GM10248 (cell line): ENCODE measurements at regions of chr20 and their contacts with region 1.

Region 1: GRCh38 chr20:47272893-47273590 is 83.5 kb downstream of the ZMYND8 start:
- DNase-seq: peak; percentile 61
- CTCF ChIP-seq: peak; percentile 81

Region 2: DNA sequence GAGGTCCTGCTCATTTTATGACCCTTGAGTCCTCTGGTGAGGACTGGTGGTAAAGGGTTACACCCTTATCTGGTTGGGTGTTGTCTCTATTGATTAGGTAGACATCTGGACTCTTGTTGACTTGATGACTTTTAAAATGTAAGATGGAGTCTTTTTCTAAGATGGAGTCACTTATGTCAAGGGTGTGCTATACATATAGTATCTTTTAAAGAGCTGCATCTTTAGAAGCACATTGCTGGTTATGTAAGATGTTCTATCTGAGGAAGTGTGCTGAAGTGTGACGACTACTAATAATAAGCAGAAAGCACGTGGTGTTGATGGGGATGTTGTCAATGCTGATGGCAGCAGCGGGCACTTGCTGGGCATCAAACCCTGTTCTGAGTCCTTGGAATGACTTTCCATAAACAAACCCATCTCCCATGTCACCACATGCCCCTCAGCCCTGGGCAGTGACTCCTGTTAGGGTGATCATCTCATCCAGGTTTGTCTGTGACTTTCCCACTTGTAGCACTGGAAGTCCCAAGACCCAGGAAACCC is 148.8 kb before region 1 on chr20:
- CTCF ChIA-PET with region 1: no interaction called
- POLR2A ChIA-PET with region 1: no interaction called
- DNase-seq: no peak
- CTCF ChIP-seq: no peak

Region 3: GRCh38 chr20:47252879-47253307 is 20.1 kb before region 1 on chr20:
- CTCF ChIA-PET with region 1: interaction called, 17 read pairs
- POLR2A ChIA-PET with region 1: interaction called, 5 read pairs
- DNase-seq: no peak
- CTCF ChIP-seq: no peak

Region 4: GRCh38 chr20:47258745-47259695 is 14.0 kb before region 1 on chr20:
- CTCF ChIA-PET with region 1: interaction called, 91 read pairs
- POLR2A ChIA-PET with region 1: interaction called, 4 read pairs
- DNase-seq: peak; percentile 73
- CTCF ChIP-seq: no peak

Region 5: DNA sequence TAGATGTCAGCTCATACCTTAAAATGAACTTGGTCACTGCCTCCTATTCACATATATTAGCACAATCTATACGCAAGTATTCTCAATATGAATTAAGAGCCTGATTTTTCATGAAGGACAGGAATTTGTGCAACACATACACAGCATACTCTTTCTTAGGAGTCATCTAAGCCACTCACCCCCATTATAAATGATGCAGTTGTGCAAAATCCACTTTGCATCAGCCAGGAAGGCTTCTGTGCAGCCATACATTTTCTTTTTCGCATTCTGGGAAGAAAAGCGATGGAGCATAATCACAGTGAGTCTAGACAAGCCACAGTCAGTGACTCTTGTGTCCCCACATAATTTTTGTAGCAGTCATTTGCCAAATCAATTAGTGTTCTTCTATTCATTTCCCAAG is 17.0 kb after region 1 on chr20:
- CTCF ChIA-PET with region 1: interaction called, 61 read pairs
- POLR2A ChIA-PET with region 1: interaction called, 3 read pairs
- DNase-seq: no peak
- CTCF ChIP-seq: no peak

Region 6: DNA sequence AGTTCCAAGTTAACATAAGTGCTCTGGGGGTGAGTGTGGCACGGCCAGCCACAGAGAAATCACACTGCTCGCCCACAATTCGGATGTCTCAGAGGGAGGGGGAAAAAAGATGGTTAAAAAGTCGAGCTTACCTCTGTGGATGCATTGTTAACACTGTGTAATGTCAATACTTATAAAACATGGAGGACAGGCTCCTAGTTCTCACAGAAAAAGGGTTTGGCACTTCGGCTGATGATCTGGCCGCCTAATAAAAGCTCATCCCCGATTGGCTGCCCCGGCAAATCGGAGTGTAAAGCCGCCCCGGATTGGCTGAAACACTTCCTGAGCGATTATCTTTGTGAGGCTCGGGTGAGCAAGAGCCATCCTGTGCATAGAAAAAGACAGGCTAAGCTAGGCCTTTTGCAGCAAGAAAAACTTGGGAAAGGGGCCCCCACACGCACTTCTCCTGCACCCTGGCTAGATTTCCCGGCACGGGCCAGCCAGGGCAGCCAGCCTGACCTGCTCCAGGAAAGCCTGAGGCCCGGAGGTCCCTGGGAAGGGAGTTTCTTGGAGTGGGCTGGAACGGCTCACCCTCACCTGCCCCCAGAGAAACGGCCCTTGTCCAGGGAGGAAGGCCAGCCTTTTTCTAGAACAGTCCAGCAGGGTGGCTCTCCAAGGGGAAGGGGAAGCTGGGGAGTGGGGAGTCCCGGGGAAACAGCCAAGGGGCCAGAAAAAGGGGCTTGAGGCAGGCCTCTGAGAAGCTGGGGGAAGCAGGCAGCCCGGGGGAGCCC is 83.7 kb after region 1 on chr20 and contains the start of gene ZMYND8:
- CTCF ChIA-PET with region 1: interaction called, 119 read pairs
- POLR2A ChIA-PET with region 1: interaction called, 6 read pairs
- DNase-seq: peak; percentile 92
- CTCF ChIP-seq: no peak

Region 7: GRCh38 chr20:47411161-47411560 is 138.1 kb after region 1 on chr20:
- CTCF ChIA-PET with region 1: interaction called, 14 read pairs
- POLR2A ChIA-PET with region 1: interaction called, 3 read pairs
- DNase-seq: no peak
- CTCF ChIP-seq: no peak

Region 8: GRCh38 chr20:47620808-47621805 is 348.1 kb after region 1 on chr20:
- CTCF ChIA-PET with region 1: interaction called, 24 read pairs
- POLR2A ChIA-PET with region 1: no interaction called
- DNase-seq: peak; percentile 27
- CTCF ChIP-seq: peak; percentile 74